ENCODE measurements at regions of chr3 and their contacts with region 1.

Region 1: GRCh38 chr3:64224826-64225610 is at the start of gene PRICKLE2:
- DNase-seq: no peak
- H3K4me3 ChIP-seq: peak within 1 kb of the TSS; percentile 28 to 34
- H3K27ac ChIP-seq: peak within 1 kb of the TSS; percentile 81
- H3K4me1 ChIP-seq: peaks cover 72% of the 10 kb centered on the region
- H3K27me3 ChIP-seq: no peaks in the 10 kb centered on the region
- CTCF ChIP-seq: no peak
- POLR2A ChIP-seq: no peak
- total RNA-seq, gene PRICKLE2: 39.3 TPM

Region 2: GRCh38 chr3:63961891-63962290 is 263.1 kb before region 1 on chr3:
- intact Hi-C with region 1: no loop called
- DNase-seq: no peak
- H3K4me3 ChIP-seq: no peak overlapping the region
- H3K27ac ChIP-seq: no peak overlapping the region
- H3K4me1 ChIP-seq: peaks cover 57% of the 10 kb centered on the region
- H3K27me3 ChIP-seq: no peaks in the 10 kb centered on the region
- CTCF ChIP-seq: peak; percentile 46 to 56 (median 55)
- POLR2A ChIP-seq: no peak

Region 3: DNA sequence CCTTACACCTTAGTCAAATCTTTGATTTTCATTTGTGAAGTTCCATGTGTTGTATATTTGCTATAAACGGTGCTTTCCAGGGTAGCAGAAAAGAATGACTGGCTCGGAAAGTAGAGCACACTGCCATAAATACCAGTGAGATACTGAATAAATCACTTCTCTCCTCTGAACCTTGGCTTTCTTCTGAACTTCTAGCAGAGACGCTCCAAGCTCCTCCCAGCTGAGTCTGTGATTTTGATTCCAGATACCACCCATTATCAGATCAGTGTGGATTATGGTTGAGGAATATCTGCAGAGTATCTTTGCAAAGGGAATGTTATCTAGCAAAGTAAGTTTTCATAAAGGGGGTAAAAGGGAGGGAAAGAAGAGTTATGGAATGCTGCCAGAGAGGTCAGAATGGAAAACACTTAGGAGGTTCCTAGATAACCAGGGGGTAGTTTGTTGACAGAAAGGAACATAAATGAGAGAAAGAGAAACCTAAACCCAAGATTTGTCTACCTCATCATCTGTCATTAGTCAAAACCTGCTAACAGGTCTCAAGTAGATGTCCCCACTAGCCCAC is 103.2 kb before region 1 on chr3:
- intact Hi-C with region 1: no loop called
- DNase-seq: no peak
- H3K4me3 ChIP-seq: no peak overlapping the region
- H3K27ac ChIP-seq: no peak overlapping the region
- H3K4me1 ChIP-seq: peaks cover 25% of the 10 kb centered on the region
- H3K27me3 ChIP-seq: no peaks in the 10 kb centered on the region
- CTCF ChIP-seq: no peak
- POLR2A ChIP-seq: no peak

Region 4: GRCh38 chr3:64267721-64268604 is 42.9 kb after region 1 on chr3:
- intact Hi-C with region 1: loop called (anchors 5 kb)
- DNase-seq: peak in 1 of 2 donors; percentile 93
- H3K4me3 ChIP-seq: peak overlapping the region; percentile 52 to 88
- H3K27ac ChIP-seq: peak overlapping the region; percentile 74
- H3K4me1 ChIP-seq: peaks cover 35% of the 10 kb centered on the region
- H3K27me3 ChIP-seq: no peaks in the 10 kb centered on the region
- CTCF ChIP-seq: no peak
- POLR2A ChIP-seq: peak in 1 of 2 donors; percentile 73

Region 5: GRCh38 chr3:64792445-64792844 is 567.4 kb after region 1 on chr3:
- intact Hi-C with region 1: no loop called
- DNase-seq: no peak
- H3K4me3 ChIP-seq: no peak overlapping the region
- H3K27ac ChIP-seq: no peak overlapping the region
- H3K4me1 ChIP-seq: no peaks in the 10 kb centered on the region
- H3K27me3 ChIP-seq: no peaks in the 10 kb centered on the region
- CTCF ChIP-seq: no peak
- POLR2A ChIP-seq: no peak